ENCODE measurements at regions of chr12 and their contacts with region 1.

Region 1: DNA sequence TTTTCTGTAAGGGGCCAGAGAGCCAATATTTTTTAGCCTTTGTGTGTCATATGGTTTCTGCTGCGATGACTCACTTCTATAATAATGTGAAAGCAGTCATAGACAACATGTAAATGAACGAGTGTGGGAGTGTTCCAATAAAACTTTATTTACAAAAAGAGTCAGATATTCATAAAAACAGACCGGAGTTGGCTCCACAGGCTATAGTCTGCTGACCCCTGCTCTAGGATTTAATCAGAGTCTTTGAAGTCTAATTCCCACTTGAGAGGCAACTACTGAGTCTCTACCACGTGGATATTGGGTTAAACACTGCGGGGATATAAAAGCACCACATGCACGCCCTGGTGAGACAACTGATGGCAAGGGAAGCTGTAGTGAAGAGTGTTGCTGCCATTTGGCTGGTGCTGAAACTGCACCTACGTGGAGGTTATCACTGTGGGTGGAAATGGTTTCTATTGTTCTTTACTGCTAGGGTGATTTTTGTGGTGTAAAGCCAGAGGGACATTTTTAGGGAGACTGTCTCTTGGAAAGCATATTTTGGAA is 3.6 kb upstream of the NINJ2 start:
- DNase-seq: peak; percentile 53
- ATAC-seq: peak; percentile 45
- H3K4me3 Mint-ChIP-seq: peak overlapping the region; percentile 36
- H3K27ac Mint-ChIP-seq: peak overlapping the region; percentile 79
- H3K4me1 Mint-ChIP-seq: peaks cover 86% of the 10 kb centered on the region
- H3K27me3 Mint-ChIP-seq: no peaks in the 10 kb centered on the region

Region 2: GRCh38 chr12:630656-631632 is 35.9 kb before region 1 on chr12:
- CTCF ChIA-PET with region 1: interaction called, 6 read pairs
- POLR2A ChIA-PET with region 1: no interaction called
- intact Hi-C with region 1: loop called in 1 of 2 experiments (anchors 5 kb)
- DNase-seq: peak; percentile 91
- ATAC-seq: peak; percentile 98
- H3K4me3 Mint-ChIP-seq: peak overlapping the region; percentile 88
- H3K27ac Mint-ChIP-seq: peak overlapping the region; percentile 100
- H3K4me1 Mint-ChIP-seq: peaks cover 47% of the 10 kb centered on the region
- H3K27me3 Mint-ChIP-seq: no peaks in the 10 kb centered on the region

Region 3: GRCh38 chr12:642633-643474 is 24.0 kb before region 1 on chr12:
- CTCF ChIA-PET with region 1: no interaction called
- POLR2A ChIA-PET with region 1: no interaction called
- intact Hi-C with region 1: loop called (anchors 1 to 2 kb)
- DNase-seq: peak; percentile 85
- ATAC-seq: peak; percentile 59
- H3K4me3 Mint-ChIP-seq: peak overlapping the region; percentile 83
- H3K27ac Mint-ChIP-seq: peak overlapping the region; percentile 97
- H3K4me1 Mint-ChIP-seq: peaks cover 64% of the 10 kb centered on the region
- H3K27me3 Mint-ChIP-seq: no peaks in the 10 kb centered on the region

Region 4: GRCh38 chr12:712172-712863 is 45.5 kb after region 1 on chr12:
- CTCF ChIA-PET with region 1: interaction called, 3 read pairs
- POLR2A ChIA-PET with region 1: interaction called, 3 read pairs
- intact Hi-C with region 1: loop called in 1 of 2 experiments (anchors 1 kb)
- DNase-seq: no peak
- ATAC-seq: no peak
- H3K4me3 Mint-ChIP-seq: no peak overlapping the region
- H3K27ac Mint-ChIP-seq: peak overlapping the region; percentile 49
- H3K4me1 Mint-ChIP-seq: peaks cover 40% of the 10 kb centered on the region
- H3K27me3 Mint-ChIP-seq: no peaks in the 10 kb centered on the region

Measured in activated CD4-positive, alpha-beta T cell treated with anti-CD3 and anti-CD28 coated beads for 36 hours (primary cell).